ENCODE measurements at regions of chr1 and their contacts with region 1.

Region 1: DNA sequence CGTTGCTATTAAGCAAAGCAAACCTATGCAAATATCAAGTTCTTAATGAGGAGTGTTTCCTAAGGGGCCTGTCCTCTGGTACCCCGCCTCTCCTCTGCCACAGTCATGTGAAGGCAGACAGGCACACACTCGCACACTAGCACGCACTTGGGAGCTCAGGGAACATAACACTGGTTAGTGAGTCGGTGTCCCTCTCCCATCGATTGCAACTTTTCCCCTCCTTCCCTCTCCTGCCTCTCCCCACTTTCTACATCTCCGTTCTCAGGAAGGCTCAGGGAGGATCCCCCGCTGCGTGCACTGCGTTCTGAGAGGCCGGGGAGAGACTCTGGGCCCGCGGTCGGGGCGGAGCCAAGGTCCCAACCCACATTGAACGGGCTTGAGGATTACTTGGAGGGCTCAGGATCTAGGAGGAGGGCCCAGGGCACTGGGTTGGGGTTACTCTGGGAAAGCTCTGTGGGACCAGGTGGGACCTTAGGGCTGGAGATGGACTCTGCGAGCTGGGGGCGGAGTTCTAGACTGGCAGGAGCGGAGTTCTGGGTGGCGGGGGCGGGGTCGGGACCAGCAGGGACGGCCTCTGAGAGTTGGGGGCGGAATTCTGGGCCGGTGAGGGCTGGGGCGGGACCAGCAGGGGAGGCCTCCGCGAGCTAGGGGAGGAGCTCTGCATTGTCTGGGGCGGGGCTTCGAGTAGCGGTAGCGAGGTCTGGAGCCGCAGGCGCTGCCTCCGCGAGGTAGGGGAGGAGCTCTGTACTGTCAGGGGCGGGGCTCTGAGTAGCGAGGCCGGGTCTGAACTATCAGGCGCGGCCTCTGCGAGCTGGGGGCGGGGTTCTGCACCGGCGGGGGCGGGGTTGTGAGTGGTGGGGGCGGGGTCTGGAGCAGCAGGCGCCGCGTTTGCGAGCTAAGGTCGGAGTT is 533 bp upstream of the LEPR start:
- DNase-seq: peak; percentile 99
- H3K4me3 ChIP-seq: peak overlapping the region; percentile 64 to 76 (median 71)
- H3K27ac ChIP-seq: peak overlapping the region; percentile 62
- H3K4me1 ChIP-seq: peaks cover 37% of the 10 kb centered on the region
- H3K27me3 ChIP-seq: no peaks in the 10 kb centered on the region
- CTCF ChIP-seq: no peak
- POLR2A ChIP-seq: peak; percentile 5

Region 2: GRCh38 chr1:65148548-65149350 is 271.2 kb before region 1 on chr1:
- CTCF ChIA-PET with region 1: no interaction called
- POLR2A ChIA-PET with region 1: no interaction called
- dilution Hi-C with region 1: no loop called
- intact Hi-C with region 1: loop called (anchors 5 kb)
- DNase-seq: peak; percentile 12
- H3K4me3 ChIP-seq: peak overlapping the region; percentile 38 to 50 (median 44)
- H3K27ac ChIP-seq: no peak overlapping the region
- H3K4me1 ChIP-seq: no peaks in the 10 kb centered on the region
- H3K27me3 ChIP-seq: peaks cover 0 to 13% of the 10 kb centered on the region in 2 experiments
- CTCF ChIP-seq: no peak
- POLR2A ChIP-seq: no peak

Region 3: GRCh38 chr1:65332821-65333220 is 87.1 kb before region 1 on chr1:
- CTCF ChIA-PET with region 1: no interaction called
- POLR2A ChIA-PET with region 1: no interaction called
- dilution Hi-C with region 1: no loop called
- intact Hi-C with region 1: no loop called
- DNase-seq: no peak
- H3K4me3 ChIP-seq: no peak overlapping the region
- H3K27ac ChIP-seq: no peak overlapping the region
- H3K4me1 ChIP-seq: no peaks in the 10 kb centered on the region
- H3K27me3 ChIP-seq: no peaks in the 10 kb centered on the region
- CTCF ChIP-seq: no peak
- POLR2A ChIP-seq: no peak

Region 4: DNA sequence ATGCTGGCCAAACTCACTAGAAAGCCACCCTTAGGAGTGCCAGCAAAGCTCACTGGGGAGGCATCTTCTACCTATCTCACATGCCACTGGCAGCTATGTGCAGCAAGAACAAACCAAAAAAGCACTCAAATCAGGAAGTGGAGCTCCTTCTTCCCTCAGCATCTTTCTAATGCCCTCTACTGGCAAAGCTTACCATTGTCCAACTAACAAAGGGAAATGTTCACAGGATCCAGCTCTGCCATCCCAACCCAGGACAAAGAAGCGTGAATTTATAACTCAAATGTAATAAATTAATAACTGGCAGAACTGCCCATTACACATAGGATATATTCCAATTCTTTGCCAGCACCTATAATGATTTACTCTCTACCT is 39.4 kb after region 1 on chr1:
- CTCF ChIA-PET with region 1: interaction called, 15 read pairs
- POLR2A ChIA-PET with region 1: no interaction called
- dilution Hi-C with region 1: no loop called
- intact Hi-C with region 1: no loop called
- DNase-seq: peak; percentile 50
- H3K4me3 ChIP-seq: no peak overlapping the region
- H3K27ac ChIP-seq: no peak overlapping the region
- H3K4me1 ChIP-seq: no peaks in the 10 kb centered on the region
- H3K27me3 ChIP-seq: no peaks in the 10 kb centered on the region
- CTCF ChIP-seq: peak; percentile 44 to 56
- POLR2A ChIP-seq: no peak

Region 5: GRCh38 chr1:66265796-66266195 is 845.9 kb after region 1 on chr1:
- CTCF ChIA-PET with region 1: no interaction called
- POLR2A ChIA-PET with region 1: no interaction called
- dilution Hi-C with region 1: no loop called
- intact Hi-C with region 1: loop called (anchors 1 kb)
- DNase-seq: peak; percentile 83
- H3K4me3 ChIP-seq: no peak overlapping the region
- H3K27ac ChIP-seq: peak overlapping the region; percentile 89
- H3K4me1 ChIP-seq: peaks cover 66% of the 10 kb centered on the region
- H3K27me3 ChIP-seq: no peaks in the 10 kb centered on the region
- CTCF ChIP-seq: no peak
- POLR2A ChIP-seq: no peak

Region 6: GRCh38 chr1:66563094-66563800 is 1143.3 kb after region 1 on chr1:
- CTCF ChIA-PET with region 1: no interaction called
- POLR2A ChIA-PET with region 1: no interaction called
- dilution Hi-C with region 1: no loop called
- intact Hi-C with region 1: loop called (anchors 10 kb)
- DNase-seq: peak; percentile 97
- H3K4me3 ChIP-seq: peak overlapping the region in 1 of 3 experiments; percentile 23
- H3K27ac ChIP-seq: peak overlapping the region; percentile 98
- H3K4me1 ChIP-seq: peaks cover 29% of the 10 kb centered on the region
- H3K27me3 ChIP-seq: no peaks in the 10 kb centered on the region
- CTCF ChIP-seq: no peak
- POLR2A ChIP-seq: peak; percentile 53

Measured in endothelial cell of umbilical vein (primary cell).